Gastrocnemius medialis (tissue), 4 donors: ENCODE measurements at regions of chr5 and their contacts with region 1.

Region 1: GRCh38 chr5:57650360-57651069 is 167.9 kb upstream of the ACTBL2 start:
- DNase-seq: peak in 1 of 2 donors; percentile 17
- ATAC-seq: peak; percentile 46 to 57
- H3K4me3 ChIP-seq: no peak overlapping the region
- H3K27ac ChIP-seq: no peak overlapping the region
- H3K4me1 ChIP-seq: peaks cover 7 to 16% of the 10 kb centered on the region in 2 donors
- H3K27me3 ChIP-seq: no peaks in the 10 kb centered on the region
- CTCF ChIP-seq: peak; percentile 39 to 62 (median 60)
- POLR2A ChIP-seq: no peak

Region 2: DNA sequence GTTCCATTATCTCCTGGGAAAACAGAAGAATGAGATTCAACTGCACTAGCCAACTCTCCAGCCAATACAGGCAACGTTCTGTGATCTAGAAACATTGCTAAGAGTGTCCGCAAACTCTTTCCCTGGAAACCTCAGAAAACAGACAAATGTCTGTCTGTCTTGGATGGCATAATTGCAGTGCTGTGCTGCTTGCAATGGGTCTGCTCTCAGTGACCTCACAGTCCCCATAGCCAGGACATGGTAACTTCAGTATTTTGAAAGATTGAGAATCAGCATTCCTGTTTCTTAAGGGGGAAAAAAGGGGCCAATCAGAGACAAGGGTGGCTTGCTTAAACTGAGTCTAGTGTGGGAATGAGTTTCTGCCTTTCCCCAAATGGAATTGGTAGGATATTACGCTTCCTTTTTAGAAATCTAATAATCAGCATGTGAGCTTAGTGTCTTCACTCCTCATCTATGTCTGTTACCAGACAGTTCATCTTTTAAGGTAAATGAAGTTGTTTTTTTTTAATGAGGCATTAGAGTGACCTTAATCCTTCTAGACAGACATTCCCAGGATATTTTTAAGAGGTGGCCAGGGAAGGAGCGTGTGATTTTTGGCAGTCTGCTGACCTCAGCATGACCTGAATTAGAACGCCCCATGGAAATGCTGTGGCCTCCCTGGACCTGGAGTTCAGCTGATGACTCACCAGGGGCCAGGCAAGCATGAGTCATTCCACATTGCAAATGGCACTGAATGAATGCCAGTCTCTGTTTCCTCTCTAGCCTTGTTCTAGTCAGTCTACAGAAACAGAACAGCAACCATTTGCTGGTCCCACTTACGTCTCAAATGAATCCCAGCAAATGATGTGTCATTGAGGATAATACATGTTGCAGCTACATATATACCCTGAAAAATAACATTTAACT is 42.3 kb after region 1 on chr5:
- in situ Hi-C with region 1: no loop called
- intact Hi-C with region 1: loop called (anchors 5 kb)
- DNase-seq: peak; percentile 79 to 87
- ATAC-seq: peak; percentile 99 to 100
- H3K4me3 ChIP-seq: peak overlapping the region in 1 of 4 donors; percentile 7
- H3K27ac ChIP-seq: peak overlapping the region; percentile 39 to 61 (median 54)
- H3K4me1 ChIP-seq: peaks cover 11 to 16% of the 10 kb centered on the region in 2 donors
- H3K27me3 ChIP-seq: no peaks in the 10 kb centered on the region
- CTCF ChIP-seq: no peak
- POLR2A ChIP-seq: no peak

Region 3: DNA sequence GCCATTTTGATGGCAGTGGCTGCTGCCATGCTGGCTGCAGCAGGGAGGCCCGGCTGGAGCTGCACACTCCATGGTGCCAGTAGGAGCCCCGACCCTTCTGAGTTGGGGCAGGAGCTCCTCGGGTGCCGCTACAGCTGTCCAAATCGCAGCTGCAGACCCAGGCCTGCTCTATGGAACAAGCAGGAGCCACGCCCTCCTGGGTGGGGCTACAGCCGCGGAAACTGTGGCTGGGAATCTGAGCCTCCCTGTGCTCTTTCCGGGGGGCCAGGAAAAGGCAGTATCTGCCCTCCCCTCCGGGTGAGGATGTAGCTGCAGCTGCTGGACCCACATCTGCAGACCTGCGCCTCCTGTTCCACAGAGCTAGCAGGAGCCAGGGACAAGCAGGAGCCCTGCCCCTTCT is 111.0 kb after region 1 on chr5:
- in situ Hi-C with region 1: no loop called
- intact Hi-C with region 1: no loop called
- DNase-seq: no peak
- ATAC-seq: no peak
- H3K4me3 ChIP-seq: no peak overlapping the region
- H3K27ac ChIP-seq: no peak overlapping the region
- H3K4me1 ChIP-seq: no peaks in the 10 kb centered on the region
- H3K27me3 ChIP-seq: no peaks in the 10 kb centered on the region
- CTCF ChIP-seq: no peak
- POLR2A ChIP-seq: no peak

Region 4: GRCh38 chr5:58224661-58225060 is 574.1 kb after region 1 on chr5:
- in situ Hi-C with region 1: no loop called
- intact Hi-C with region 1: loop called (anchors 10 kb)
- DNase-seq: no peak
- ATAC-seq: no peak
- H3K4me3 ChIP-seq: no peak overlapping the region
- H3K27ac ChIP-seq: no peak overlapping the region
- H3K4me1 ChIP-seq: peaks cover 21% of the 10 kb centered on the region in 2 donors
- H3K27me3 ChIP-seq: no peaks in the 10 kb centered on the region
- CTCF ChIP-seq: no peak
- POLR2A ChIP-seq: no peak